Activated T-helper 2 cell treated with anti-CD3 and anti-CD28 coated beads, Interferon-gamma antibody, Interleukin-2, Interleukin-4, amounts not matched to agents 10 μg/mL and 5 μg/mL and 100 μg/mL, durations not matched to agents 14 hours and 24 hours and 36 hours (primary cell): ENCODE measurements at regions of chr21 and their contacts with region 1.

Region 1: GRCh38 chr21:42400525-42400924 is 3.2 kb upstream of the UBASH3A start:
- DNase-seq: no peak
- H3K4me3 Mint-ChIP-seq: peak overlapping the region; percentile 53
- H3K27ac Mint-ChIP-seq: peak overlapping the region; percentile 82
- H3K4me1 Mint-ChIP-seq: peaks cover 50% of the 10 kb centered on the region
- H3K27me3 Mint-ChIP-seq: no peaks in the 10 kb centered on the region

Region 2: GRCh38 chr21:42009831-42010523 is 390.5 kb before region 1 on chr21 and contains the start of gene ZBTB21:
- intact Hi-C with region 1: loop called (anchors 10 kb)
- DNase-seq: peak; percentile 97
- H3K4me3 Mint-ChIP-seq: peak within 1 kb of the TSS; percentile 94
- H3K27ac Mint-ChIP-seq: peak within 1 kb of the TSS; percentile 99
- H3K4me1 Mint-ChIP-seq: peaks cover 25% of the 10 kb centered on the region
- H3K27me3 Mint-ChIP-seq: peaks cover 18% of the 10 kb centered on the region
- total RNA-seq, gene ZBTB21: 24.5 and 25.7 TPM in 2 replicates

Region 3: DNA sequence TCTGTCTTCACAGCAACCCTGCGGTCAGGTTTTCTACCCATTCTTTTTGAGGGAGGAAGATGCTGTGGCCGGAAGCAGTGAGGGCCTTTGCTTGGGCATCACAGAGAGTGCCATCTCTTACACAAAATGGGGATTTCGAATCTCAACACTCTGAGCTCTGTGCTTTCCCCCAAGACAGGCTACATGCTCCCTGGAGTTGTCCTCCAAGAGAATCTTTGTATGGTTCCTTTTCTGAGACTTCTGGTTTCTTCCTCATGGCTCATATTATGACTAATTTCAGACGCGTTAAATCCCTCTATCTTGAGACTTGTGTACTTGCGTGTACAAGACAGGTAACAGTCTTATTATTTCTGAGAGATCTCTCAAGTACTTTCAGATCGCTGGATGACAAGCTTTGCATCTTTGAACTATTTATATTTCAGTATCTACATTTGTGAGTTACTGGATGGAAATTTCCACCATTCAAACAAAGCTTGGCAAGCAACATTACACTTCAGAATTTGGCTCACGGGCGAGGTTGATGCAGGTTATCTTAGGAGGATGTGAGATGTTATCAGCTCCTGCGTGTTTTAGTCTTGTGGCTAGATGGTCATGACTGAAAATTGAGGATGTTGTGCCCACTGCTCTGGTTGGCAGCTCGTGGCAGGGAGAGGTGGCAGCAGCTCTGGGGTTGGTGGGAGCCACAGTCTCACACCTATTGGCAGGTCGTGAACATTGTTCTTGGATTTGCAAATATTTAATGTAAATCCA is 162.2 kb before region 1 on chr21:
- intact Hi-C with region 1: loop called (anchors 1 kb)
- DNase-seq: peak; percentile 57
- H3K4me3 Mint-ChIP-seq: peak overlapping the region; percentile 43
- H3K27ac Mint-ChIP-seq: peak overlapping the region; percentile 82
- H3K4me1 Mint-ChIP-seq: peaks cover 51% of the 10 kb centered on the region
- H3K27me3 Mint-ChIP-seq: no peaks in the 10 kb centered on the region

Region 4: DNA sequence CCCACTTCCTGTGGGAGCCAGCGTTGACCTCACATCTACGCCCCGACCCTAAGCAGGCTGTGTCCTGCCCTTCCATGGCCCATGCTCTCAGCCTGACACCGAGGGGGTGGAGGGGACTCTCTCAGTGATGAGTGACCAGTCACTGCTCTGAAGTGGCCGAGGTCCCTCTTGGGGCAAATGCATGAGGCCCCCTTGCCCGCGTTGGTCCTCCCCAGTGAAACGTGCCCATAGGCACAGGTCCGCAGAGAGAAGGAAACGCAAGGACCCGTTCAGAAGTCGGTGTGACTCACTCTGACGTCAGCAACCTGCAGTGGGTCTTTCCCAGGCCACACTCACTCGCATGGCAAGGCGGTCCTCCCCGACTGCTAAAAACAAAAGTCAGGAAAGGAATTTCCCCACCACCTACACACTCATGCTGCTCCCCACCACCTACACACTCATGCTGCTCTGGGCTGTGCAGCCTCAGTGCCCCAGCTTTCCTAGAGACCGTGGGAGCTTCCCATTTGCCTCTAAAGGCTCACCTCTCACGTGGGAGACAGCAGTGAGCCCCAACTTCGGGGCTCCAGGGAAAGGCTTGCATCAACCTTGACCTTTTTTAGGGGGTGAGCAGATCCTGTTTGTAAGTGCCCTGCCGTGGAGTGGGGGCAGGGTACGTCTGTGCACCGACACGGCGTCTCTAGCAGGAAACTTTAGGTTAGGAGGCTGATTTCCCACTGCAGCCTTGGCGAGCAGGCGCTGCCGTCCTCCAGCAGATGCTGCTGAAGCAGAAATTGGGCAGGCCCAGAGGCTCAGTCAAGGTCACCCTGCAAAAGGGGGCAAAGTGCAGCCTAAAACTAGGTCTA is 14.6 kb after region 1 on chr21:
- intact Hi-C with region 1: loop called (anchors 1 kb)
- DNase-seq: peak; percentile 82
- H3K4me3 Mint-ChIP-seq: peak overlapping the region; percentile 57
- H3K27ac Mint-ChIP-seq: no peak overlapping the region
- H3K4me1 Mint-ChIP-seq: peaks cover 58% of the 10 kb centered on the region
- H3K27me3 Mint-ChIP-seq: no peaks in the 10 kb centered on the region

Region 5: DNA sequence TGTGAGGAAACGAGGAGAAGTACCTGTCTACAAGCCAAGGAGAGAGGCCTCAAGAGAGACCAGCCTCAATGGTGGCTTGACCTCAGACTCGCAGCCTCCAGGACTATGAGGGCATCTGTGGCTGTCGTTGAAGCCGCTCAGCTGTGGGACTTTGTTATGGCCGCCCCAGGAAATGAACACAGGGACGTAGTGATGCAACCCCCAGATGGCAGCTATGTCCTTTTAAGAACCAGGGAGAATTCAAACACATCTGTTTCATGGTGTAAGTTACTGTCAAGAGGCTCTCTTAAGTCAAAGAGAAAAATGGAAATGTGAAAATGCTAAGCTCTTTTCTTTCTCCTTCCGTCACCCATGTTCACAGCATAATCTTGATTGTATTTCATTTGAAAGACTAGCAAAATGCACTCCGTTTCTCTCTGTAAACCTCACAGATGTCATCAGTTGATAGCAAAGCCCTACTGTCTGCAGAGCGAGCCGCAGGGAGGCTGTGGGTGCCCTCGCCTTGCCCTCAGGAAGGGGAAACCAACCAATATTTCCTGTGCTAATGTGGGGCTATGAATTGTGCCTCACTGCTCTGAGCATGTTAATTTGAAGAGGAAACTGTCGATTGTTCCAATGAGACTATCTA is 24.5 kb after region 1 on chr21:
- intact Hi-C with region 1: loop called (anchors 1 kb)
- DNase-seq: peak; percentile 81
- H3K4me3 Mint-ChIP-seq: peak overlapping the region; percentile 68
- H3K27ac Mint-ChIP-seq: peak overlapping the region; percentile 93
- H3K4me1 Mint-ChIP-seq: peaks cover 67% of the 10 kb centered on the region
- H3K27me3 Mint-ChIP-seq: no peaks in the 10 kb centered on the region

Region 6: DNA sequence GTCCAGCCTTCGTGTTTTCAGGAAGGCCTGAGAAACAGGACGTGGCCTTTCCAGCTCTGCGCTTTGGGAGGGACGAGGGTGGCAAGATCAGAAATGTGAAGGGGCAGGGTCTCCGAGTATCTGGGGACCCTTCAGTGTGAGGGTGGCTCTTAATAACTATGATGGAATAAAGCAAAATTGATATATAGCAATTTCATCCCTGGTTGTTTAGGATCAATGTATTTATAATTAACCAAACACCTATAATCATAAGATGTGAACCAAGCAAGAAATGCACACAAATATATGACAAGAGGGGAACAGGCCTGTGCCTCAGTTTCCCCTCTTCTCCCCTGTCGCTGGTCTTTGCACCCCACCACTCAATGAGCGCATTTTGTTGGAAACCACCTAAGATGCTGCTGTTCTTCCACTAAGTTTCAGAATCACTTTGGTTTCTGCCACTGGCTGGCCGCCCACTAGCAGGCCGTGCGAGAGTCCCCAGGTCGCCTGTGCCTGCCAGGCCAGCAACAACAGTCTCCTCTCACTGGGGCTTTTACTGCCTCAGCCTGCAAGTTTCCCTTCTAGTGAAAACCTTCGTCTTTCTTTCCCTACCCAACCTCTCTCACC is 39.8 kb after region 1 on chr21:
- intact Hi-C with region 1: loop called (anchors 2 kb)
- DNase-seq: no peak
- H3K4me3 Mint-ChIP-seq: peak overlapping the region; percentile 14
- H3K27ac Mint-ChIP-seq: peak overlapping the region; percentile 96
- H3K4me1 Mint-ChIP-seq: peaks cover 61% of the 10 kb centered on the region
- H3K27me3 Mint-ChIP-seq: no peaks in the 10 kb centered on the region

Region 7: DNA sequence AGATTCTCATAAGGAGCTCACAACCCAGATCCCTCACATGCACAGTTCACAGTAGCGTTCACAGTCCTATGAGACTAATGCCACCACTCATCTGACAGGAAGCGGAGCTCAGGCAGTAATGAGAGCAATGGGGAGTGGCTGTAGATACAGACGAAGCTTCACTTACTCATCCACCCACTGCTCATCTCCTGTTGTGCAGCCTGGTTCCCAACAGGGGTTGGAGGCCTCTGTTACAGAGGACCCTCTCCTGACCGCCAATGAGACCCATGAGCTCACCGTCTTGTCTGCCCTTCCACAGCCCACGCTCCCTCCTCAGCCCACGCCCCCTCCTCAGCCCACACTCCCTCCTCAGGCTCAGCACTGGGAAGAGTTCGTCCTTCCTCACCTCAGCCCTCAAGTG is 55.9 kb after region 1 on chr21:
- intact Hi-C with region 1: no loop called
- DNase-seq: peak; percentile 39
- H3K4me3 Mint-ChIP-seq: no peak overlapping the region
- H3K27ac Mint-ChIP-seq: peak overlapping the region; percentile 74
- H3K4me1 Mint-ChIP-seq: peaks cover 33% of the 10 kb centered on the region
- H3K27me3 Mint-ChIP-seq: no peaks in the 10 kb centered on the region

Region 8: DNA sequence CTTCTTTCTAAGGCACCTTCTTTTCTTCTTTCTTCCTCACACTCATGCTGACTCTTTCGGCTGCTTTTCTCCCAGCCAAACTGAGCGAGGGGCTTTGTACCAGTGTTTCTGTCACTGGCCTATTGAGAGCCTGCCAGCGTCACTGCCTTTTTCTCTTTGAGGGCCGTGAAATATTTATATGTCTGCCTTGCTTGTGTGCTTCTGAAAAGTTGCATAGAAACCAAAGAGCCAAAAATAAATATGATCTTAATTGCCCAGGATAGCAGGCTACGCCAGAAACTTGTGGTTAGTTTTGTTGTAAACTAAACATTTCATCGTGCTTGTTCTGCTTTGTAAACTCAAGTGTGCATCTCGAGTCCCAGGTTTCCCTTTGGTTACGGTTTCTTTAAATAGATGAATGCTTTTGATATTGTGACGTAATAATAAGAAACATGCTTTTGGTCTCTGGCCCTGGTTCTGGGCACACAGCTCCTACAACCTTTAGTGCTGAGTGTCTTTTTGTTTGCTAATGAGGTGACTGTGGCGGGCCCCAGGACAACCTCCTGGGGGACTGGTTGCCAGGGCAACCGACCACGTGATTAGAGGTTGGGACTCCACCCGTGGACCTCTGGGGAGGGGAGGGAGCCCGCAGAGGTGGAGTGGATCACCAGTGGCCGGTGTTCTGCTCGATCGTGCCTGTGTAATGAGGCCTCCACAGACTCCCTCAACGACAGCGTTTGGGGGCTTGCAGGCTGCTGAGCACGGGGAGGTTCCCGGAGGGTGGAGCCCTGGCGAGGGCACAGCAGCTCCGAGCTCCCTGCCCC is 124.0 kb after region 1 on chr21:
- intact Hi-C with region 1: loop called (anchors 5 kb)
- DNase-seq: no peak
- H3K4me3 Mint-ChIP-seq: no peak overlapping the region
- H3K27ac Mint-ChIP-seq: no peak overlapping the region
- H3K4me1 Mint-ChIP-seq: peaks cover 40% of the 10 kb centered on the region
- H3K27me3 Mint-ChIP-seq: no peaks in the 10 kb centered on the region